Right ventricle myocardium inferior (tissue), 1 donor: ENCODE measurements at regions of chr6 and their contacts with region 1.

Region 1: DNA sequence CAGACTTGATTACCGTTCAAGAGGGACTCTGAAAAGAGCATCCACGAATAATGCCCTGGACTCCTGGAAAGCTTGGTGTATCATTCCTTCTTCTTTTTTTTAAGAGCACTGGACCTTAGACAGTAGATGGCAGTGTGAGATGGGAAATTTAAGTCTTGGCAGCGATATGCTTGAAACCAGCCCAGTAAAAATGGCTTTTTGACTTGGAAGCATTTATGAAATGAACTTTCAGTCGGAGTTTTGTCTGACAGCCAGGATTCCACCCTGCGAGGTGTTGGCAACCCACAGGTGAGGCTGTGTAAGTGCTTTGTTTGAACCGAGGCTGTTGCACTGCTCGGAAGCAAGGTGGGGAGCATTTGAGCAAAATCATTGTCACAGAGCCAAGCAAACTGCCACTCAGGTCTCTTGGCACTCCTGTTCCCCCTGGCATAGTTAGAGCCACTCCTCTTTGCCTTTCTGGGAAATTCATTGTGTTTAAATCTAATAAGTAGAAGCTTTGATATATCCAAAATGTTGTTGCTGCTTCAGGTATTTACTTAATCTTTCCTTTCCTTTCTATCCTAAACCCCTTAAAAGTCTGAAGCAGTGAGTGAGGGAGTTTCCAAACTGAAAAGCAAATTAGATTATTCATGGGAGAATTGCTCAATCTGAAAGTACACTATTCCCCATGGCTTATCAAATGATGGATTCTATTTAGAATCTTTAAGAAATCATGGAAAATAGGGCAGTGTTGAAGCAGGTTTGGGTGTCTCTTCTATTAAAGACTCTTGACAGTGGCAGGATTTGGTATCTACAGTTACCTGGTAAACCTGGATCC is 272.8 kb upstream of the SLC35B3 start:
- DNase-seq: no peak
- ATAC-seq: peak; percentile 37

Region 2: DNA sequence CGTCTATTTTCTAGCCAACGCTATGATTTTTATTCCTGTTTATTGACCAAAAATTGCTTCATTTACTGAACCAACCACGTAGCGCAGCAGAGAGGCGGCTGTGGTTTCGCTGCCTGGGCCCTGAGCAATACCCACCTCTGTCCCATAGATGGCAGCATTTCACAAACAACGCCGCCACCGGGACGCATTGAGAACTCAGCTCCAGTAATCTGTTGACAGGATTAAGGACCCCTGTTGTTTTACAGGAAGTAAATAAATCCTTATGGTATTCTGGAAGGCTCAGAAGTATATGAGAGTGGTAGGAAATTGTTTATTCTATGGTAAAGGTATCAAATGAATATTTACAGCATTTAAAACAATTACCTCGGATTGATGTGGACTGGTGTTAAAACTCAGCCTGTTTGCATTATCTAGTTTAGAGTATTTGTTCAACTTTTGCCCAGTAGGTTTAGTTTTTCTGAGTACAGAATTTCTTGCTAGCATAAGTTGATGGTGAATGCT is 275.1 kb after region 1 on chr6:
- intact Hi-C with region 1: loop called (anchors 10 kb)
- DNase-seq: peak; percentile 77
- ATAC-seq: peak; percentile 67

Region 3: DNA sequence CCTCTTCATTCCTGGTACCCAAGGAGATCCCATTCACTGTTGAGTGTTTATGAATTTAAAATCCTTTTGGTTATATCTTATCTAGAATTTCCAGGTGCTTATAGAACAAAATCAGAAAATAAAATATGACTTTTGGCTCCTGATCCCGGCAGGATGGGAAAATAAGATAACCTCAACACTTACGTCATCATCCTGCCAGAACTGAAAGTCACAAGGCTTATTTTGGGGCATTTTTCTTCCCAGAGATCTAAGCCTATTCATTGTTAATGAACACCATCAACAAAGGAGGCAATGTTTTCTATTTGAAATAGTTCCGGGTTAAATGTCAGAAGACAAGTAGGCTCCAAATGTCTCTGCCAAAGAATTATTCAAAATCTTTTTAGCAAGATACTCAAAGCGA is 1126.1 kb after region 1 on chr6:
- intact Hi-C with region 1: no loop called
- DNase-seq: no peak
- ATAC-seq: no peak